PC-3 (cell line): ENCODE measurements at regions of chr14 and their contacts with region 1.

Region 1: DNA sequence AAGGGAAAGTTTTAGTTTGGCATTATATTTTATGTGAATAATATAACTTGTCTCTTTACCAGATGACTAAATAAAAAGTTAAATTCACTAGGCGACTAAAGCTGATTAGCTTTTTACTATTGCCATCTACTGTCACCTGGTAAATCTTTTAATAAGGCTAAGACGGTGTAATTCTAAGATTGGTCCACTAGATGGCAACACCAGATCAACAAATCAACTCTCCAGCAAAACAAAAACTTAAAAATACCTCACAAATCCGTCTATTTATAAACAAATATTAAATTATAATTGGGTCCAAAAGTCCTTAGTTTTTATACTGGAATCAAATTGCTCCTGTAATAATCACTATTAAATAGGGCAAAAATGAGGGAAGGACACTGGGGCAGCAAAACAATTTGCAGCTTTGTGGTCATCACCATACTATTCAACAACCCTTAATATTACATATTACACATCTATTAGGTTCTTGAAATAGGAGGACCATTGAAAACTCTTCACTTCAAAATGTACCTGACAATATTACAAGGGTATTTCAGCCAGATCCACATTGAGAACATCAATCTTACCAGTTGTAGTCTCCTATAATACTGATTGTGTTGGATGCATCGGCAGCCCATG is 47.9 kb downstream of the GALC start:
- DNase-seq: peak; percentile 66
- ATAC-seq: no peak
- H3K4me3 ChIP-seq: no peak overlapping the region
- H3K27ac ChIP-seq: no peak overlapping the region
- H3K4me1 ChIP-seq: no peaks in the 10 kb centered on the region
- H3K27me3 ChIP-seq: no peaks in the 10 kb centered on the region
- CTCF ChIP-seq: peak; percentile 74

Region 2: DNA sequence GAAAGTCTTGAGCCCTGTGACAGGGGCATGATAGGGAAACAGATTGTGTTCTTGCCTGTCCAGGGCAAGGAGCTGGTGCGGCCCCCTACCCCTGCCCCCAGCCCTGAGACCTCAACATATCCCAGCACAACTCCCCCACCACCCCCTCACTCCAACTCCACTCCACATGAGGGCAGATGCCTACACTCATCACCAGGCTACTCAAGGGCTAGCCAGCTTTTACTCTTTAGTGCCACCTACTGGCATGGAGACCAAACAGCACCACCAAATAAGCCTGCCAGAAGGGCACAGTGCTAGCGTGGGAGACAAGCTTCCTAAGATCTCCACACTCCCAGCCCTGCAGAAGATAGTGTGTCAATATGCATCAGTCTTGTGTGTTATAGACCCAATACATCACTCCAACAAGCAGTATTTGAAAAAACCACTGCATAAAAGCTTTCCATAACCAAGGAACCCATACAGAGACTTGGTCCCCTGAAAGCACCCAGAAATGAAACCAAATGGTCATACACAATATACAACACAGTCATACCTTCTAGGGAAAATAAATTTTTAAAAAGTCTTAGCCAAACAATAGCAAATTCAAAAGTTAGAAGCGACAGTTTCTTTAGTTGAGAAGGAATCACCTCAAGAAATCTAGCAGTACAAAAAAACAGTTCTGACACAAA is 223.5 kb after region 1 on chr14:
- CTCF ChIA-PET with region 1: no interaction called
- POLR2A ChIA-PET with region 1: no interaction called
- intact Hi-C with region 1: loop called (anchors 2 kb)
- DNase-seq: peak; percentile 61
- ATAC-seq: peak; percentile 55; the same call in 1 of the 2 replicates
- H3K4me3 ChIP-seq: no peak overlapping the region
- H3K27ac ChIP-seq: no peak overlapping the region
- H3K4me1 ChIP-seq: peaks cover 12% of the 10 kb centered on the region
- H3K27me3 ChIP-seq: no peaks in the 10 kb centered on the region
- CTCF ChIP-seq: peak; percentile 84

Region 3: GRCh38 chr14:88189417-88190191 is 244.5 kb after region 1 on chr14:
- CTCF ChIA-PET with region 1: interaction called, 4 read pairs
- POLR2A ChIA-PET with region 1: no interaction called
- intact Hi-C with region 1: loop called (anchors 5 kb)
- DNase-seq: peak; percentile 96
- ATAC-seq: peak; percentile 98
- H3K4me3 ChIP-seq: peak overlapping the region; percentile 58
- H3K27ac ChIP-seq: no peak overlapping the region
- H3K4me1 ChIP-seq: 0 out of 2 replicates have a peak, but pooled peaks cover 5% of the 10 kb centered on the region
- H3K27me3 ChIP-seq: peaks cover 17% of the 10 kb centered on the region
- CTCF ChIP-seq: peak; percentile 86

Region 4: DNA sequence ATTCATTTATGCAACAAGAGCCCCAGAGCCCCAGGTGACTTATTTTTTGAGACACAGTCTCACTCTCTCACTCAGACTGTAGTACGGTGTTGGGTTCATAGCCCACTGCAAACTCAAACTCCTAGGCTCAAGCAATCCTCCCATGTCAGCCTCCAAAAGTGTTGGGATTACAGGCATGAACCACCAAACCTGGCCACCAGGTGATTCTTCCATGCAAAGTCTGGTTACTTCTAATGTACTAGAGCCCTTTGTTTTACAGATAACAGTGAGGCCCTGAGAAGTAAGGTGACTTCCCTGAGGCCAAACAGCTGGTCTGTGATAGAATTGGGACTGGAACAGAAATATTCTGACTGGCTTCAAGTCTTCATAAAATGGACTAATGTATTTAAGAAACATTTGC is 387.9 kb after region 1 on chr14:
- CTCF ChIA-PET with region 1: no interaction called
- POLR2A ChIA-PET with region 1: no interaction called
- intact Hi-C with region 1: no loop called
- DNase-seq: no peak
- ATAC-seq: no peak
- H3K4me3 ChIP-seq: no peak overlapping the region
- H3K27ac ChIP-seq: no peak overlapping the region
- H3K4me1 ChIP-seq: no peaks in the 10 kb centered on the region
- H3K27me3 ChIP-seq: peaks cover 52% of the 10 kb centered on the region
- CTCF ChIP-seq: no peak

Region 5: GRCh38 chr14:88380405-88380804 is 435.3 kb after region 1 on chr14:
- CTCF ChIA-PET with region 1: no interaction called
- POLR2A ChIA-PET with region 1: no interaction called
- intact Hi-C with region 1: loop called (anchors 2 kb)
- DNase-seq: peak; percentile 61
- ATAC-seq: peak; percentile 63
- H3K4me3 ChIP-seq: no peak overlapping the region
- H3K27ac ChIP-seq: no peak overlapping the region
- H3K4me1 ChIP-seq: peaks cover 9% of the 10 kb centered on the region; the same call in 1 of the 2 replicates
- H3K27me3 ChIP-seq: no peaks in the 10 kb centered on the region
- CTCF ChIP-seq: peak; percentile 73

Region 6: DNA sequence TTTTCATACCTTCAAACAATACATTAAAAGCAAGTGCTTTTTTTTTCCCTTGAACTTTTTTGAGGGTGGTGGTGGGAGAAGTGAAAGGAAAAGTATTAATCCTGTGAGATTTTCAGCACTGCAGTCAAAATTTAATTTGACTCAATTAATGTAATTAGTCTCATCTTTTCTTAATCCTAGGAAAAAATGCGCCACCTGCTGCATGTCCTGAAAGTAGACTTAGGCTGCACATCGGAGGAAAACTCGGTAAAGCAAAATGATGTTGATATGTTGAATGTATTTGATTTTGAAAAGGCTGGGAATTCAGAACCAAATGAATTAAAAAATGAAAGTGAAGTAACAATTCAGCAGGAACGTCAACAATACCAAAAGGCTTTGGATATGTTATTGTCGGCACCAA is 492.6 kb after region 1 on chr14:
- CTCF ChIA-PET with region 1: no interaction called
- POLR2A ChIA-PET with region 1: no interaction called
- intact Hi-C with region 1: loop called (anchors 5 kb)
- DNase-seq: peak; percentile 25
- ATAC-seq: no peak
- H3K4me3 ChIP-seq: no peak overlapping the region
- H3K27ac ChIP-seq: no peak overlapping the region
- H3K4me1 ChIP-seq: peaks cover 4% of the 10 kb centered on the region
- H3K27me3 ChIP-seq: no peaks in the 10 kb centered on the region
- CTCF ChIP-seq: peak; percentile 74